GM10248 (cell line): ENCODE measurements at regions of chr1 and their contacts with region 1.

Region 1: GRCh38 chr1:111587509-111588174 is 31.9 kb upstream of the RAP1A start:
- DNase-seq: no peak
- CTCF ChIP-seq: no peak

Region 2: DNA sequence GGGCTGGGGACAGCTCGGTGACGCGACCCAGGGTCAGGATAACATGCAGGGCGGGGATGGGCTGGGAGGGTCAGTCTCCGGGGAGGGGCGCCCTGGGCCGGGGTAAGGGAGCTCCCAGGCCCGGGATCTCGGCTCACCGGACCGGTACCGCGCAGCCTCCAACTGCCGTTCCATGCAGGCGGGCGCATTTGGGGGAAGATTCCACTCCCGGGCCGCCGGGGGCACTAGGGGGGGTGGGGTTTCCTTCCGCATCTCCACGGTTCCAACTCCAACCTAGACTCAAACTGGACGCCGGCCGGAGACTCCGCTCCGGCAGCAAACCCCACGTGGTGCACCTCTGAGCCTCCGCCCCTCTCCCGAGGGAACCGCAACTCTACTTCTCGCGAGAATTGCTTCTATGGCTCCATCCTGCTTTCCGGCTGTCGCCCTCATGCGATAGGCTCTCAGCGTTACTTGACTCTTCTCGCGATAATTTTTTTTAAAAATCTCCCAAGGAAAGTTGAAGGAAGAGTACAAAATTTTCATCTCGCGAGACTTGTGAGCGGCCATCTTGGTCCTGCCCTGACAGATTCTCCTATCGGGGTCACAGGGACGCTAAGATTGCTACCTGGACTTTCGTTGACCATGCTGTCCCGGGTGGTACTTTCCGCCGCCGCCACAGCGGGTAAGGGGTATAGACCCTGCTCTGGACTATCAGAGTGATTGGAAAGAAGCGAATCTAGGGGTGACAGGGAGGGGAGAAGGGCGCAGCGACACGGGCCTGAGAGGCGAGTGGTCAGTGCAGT is 138.5 kb before region 1 on chr1 and contains the starts of genes ATP5PB and WDR77:
- CTCF ChIA-PET with region 1: no interaction called
- POLR2A ChIA-PET with region 1: no interaction called
- DNase-seq: peak; percentile 98
- CTCF ChIP-seq: no peak

Region 3: GRCh38 chr1:111570781-111571181 is 16.9 kb before region 1 on chr1:
- CTCF ChIA-PET with region 1: interaction called, 12 read pairs
- POLR2A ChIA-PET with region 1: no interaction called
- DNase-seq: peak; percentile 38
- CTCF ChIP-seq: peak; percentile 30